Testis (tissue), 5 donors: ENCODE measurements at regions of chr10 and their contacts with region 1.

Region 1: DNA sequence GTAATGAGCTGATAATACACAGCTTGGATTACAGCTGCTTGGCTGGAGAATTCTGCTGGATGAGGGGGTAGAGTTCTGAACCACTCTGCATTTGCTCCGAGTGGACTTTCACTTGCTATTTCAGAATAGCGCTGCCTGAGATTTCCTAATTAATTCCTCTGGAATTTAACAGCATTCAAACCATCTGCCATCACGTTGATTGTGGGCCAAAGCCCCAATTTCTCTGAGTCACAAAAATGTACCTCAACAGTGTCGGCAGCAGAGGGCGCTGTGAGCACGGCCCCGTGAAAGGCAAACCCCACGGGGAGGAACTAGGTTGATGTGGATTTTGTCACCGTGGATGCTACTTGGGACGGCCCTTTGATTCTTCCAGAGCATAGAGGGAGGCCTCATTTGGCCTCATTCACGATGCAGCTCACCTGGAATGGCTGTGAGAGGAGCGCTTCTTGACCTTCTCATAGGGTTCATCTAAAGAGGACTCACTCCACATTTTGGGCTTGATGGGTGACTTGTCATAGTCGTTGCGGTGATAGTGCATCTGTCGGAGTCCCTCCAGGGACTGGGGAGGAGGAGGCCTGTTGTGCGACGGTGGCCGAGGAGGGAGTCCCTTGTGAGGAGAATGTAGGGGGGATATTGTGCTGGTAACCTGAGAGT is 73.3 kb downstream of the PRPF18 start:
- DNase-seq: peak; percentile 71
- H3K4me3 ChIP-seq: no peak overlapping the region
- H3K27ac ChIP-seq: no peak overlapping the region
- H3K4me1 ChIP-seq: no peaks in the 10 kb centered on the region
- H3K27me3 ChIP-seq: no peaks in the 10 kb centered on the region
- CTCF ChIP-seq: peak; percentile 72 to 87 (median 84)
- POLR2A ChIP-seq: no peak

Region 2: GRCh38 chr10:13776861-13777311 is 116.9 kb after region 1 on chr10:
- intact Hi-C with region 1: loop called (anchors 5 kb)
- DNase-seq: no peak
- H3K4me3 ChIP-seq: no peak overlapping the region
- H3K27ac ChIP-seq: no peak overlapping the region
- H3K4me1 ChIP-seq: no peaks in the 10 kb centered on the region
- H3K27me3 ChIP-seq: no peaks in the 10 kb centered on the region
- CTCF ChIP-seq: no peak
- POLR2A ChIP-seq: no peak